Adrenal gland (tissue), 19 donors: ENCODE measurements at regions of chr5 and their contacts with region 1.

Region 1: GRCh38 chr5:119943148-119943547 is 313.8 kb downstream of the FAM170A start:
- DNase-seq: no peak
- H3K4me3 ChIP-seq: no peak overlapping the region
- H3K27ac ChIP-seq: no peak overlapping the region
- H3K4me1 ChIP-seq: no peaks in the 10 kb centered on the region
- H3K27me3 ChIP-seq: no peaks in the 10 kb centered on the region
- CTCF ChIP-seq: peak; percentile 23 to 43 (median 36)
- POLR2A ChIP-seq: no peak

Region 2: GRCh38 chr5:119808474-119808873 is 134.7 kb before region 1 on chr5:
- intact Hi-C with region 1: no loop called
- DNase-seq: no peak
- H3K4me3 ChIP-seq: no peak overlapping the region
- H3K27ac ChIP-seq: no peak overlapping the region
- H3K4me1 ChIP-seq: no peaks in the 10 kb centered on the region
- H3K27me3 ChIP-seq: no peaks in the 10 kb centered on the region
- CTCF ChIP-seq: no peak
- POLR2A ChIP-seq: no peak

Region 3: DNA sequence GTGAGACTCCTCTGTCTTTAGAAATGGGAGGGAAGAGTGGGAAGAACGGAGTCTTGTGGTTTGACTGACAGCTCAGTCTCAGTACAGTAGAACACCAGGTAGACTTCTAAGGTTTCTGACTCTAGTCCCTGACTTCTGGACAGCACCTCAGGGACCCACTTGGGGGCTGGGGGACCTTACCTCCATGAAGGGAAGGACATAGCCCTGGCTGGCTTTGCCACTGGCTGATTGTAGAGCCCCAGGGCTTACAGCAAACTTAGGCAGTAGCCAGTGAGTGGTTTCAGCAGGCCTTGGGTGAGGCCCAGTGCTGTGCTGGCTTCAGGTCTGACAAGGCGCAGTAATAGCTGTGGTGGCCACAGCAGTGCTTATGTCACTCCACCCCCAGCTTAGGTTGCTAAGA is 230.9 kb after region 1 on chr5:
- intact Hi-C with region 1: no loop called
- DNase-seq: no peak
- H3K4me3 ChIP-seq: no peak overlapping the region
- H3K27ac ChIP-seq: no peak overlapping the region
- H3K4me1 ChIP-seq: no peaks in the 10 kb centered on the region
- H3K27me3 ChIP-seq: no peaks in the 10 kb centered on the region
- CTCF ChIP-seq: no peak
- POLR2A ChIP-seq: no peak

Region 4: GRCh38 chr5:120217021-120217420 is 273.9 kb after region 1 on chr5:
- intact Hi-C with region 1: no loop called
- DNase-seq: no peak
- H3K4me3 ChIP-seq: no peak overlapping the region
- H3K27ac ChIP-seq: no peak overlapping the region
- H3K4me1 ChIP-seq: no peaks in the 10 kb centered on the region
- H3K27me3 ChIP-seq: no peaks in the 10 kb centered on the region
- CTCF ChIP-seq: no peak
- POLR2A ChIP-seq: no peak

Region 5: GRCh38 chr5:120463991-120464626 is 521.0 kb after region 1 on chr5 and contains the start of gene PRR16:
- intact Hi-C with region 1: loop called in 1 of 2 experiments (anchors 5 kb)
- DNase-seq: peak in 6 of 7 donors; percentile 15 to 55 (median 38)
- H3K4me3 ChIP-seq: peak within 1 kb of the TSS in 2 of 4 donors; percentile 52 to 65
- H3K27ac ChIP-seq: peak within 1 kb of the TSS in 3 of 5 donors; percentile 19 to 72 (median 60)
- H3K4me1 ChIP-seq: peaks cover 0 to 12% of the 10 kb centered on the region in 2 donors
- H3K27me3 ChIP-seq: no peaks in the 10 kb centered on the region
- CTCF ChIP-seq: peak in 3 of 6 experiments; percentile 22 to 45 (median 39)
- POLR2A ChIP-seq: peak in 1 of 2 donors; percentile 57
- total RNA-seq, gene PRR16: 0.17 to 22.6 (median 3.3) TPM